GM12878 (cell line): ENCODE measurements at regions of chr15 and their contacts with region 1.

Region 1: GRCh38 chr15:62649793-62650420 is 392.6 kb upstream of the TPM1 start:
- DNase-seq: peak; percentile 46
- ATAC-seq: peak; percentile 95
- H3K4me3 ChIP-seq: 0 out of 2 replicates have a peak overlapping the region, but pooled peaks have one; percentile 31
- H3K27ac ChIP-seq: peak overlapping the region; percentile 70
- H3K4me1 ChIP-seq: peaks cover 20% of the 10 kb centered on the region
- H3K27me3 ChIP-seq: no peaks in the 10 kb centered on the region
- CTCF ChIP-seq: no peak
- EP300 ChIP-seq: no peak
- POLR2A ChIP-seq: no peak
- RAD21 ChIP-seq: no peak

Region 2: DNA sequence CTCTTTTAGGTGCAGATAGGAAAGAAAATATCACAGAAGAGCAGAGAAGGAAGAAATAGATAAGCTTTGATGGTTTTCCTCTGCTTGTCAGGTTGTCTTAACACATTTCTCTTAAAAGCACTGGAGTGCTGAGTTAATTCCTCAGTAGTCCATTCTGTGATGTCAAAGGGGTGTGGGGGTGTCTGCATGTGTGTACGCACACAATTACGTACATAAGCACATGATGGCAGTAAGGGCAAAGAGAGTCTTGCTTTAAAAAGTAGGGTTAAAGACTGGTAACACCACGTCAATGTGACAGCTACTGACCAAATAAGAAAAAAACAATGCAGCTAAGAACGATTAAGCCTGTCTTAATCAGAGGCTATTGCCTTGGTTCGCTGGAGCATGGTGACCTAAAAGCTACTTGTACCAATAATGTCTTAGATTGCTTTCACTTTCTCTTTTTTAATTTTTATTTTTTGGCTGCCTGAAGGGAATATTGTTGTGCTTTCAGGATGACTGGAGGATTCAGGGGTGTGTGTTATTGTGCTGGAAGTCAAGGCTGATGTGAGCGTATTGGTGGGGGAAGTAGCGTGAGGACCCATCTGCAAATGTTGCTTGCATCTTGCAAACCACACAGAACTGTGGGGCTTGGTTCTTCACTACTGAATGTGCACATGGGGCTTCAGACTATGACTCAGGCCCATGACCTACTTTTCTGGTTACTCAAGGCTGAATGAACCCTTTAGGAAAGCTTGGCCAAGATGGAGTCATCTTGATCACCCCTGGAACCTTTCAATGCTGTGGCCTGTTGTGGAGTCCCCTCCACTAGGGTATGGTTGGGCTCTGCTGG is 25.1 kb before region 1 on chr15:
- CTCF ChIA-PET with region 1: no interaction called
- POLR2A ChIA-PET with region 1: no interaction called
- RAD21 ChIA-PET with region 1: no interaction called
- SMC1A ChIA-PET with region 1: no interaction called
- in situ Hi-C with region 1: no loop called
- intact Hi-C with region 1: loop called (anchors 2 kb)
- DNase-seq: peak; percentile 27
- ATAC-seq: peak; percentile 87
- H3K4me3 ChIP-seq: no peak overlapping the region
- H3K27ac ChIP-seq: no peak overlapping the region
- H3K4me1 ChIP-seq: no peaks in the 10 kb centered on the region
- H3K27me3 ChIP-seq: no peaks in the 10 kb centered on the region
- CTCF ChIP-seq: no peak
- EP300 ChIP-seq: no peak
- POLR2A ChIP-seq: no peak
- RAD21 ChIP-seq: no peak

Region 3: GRCh38 chr15:62672268-62672667 is 22.4 kb after region 1 on chr15:
- CTCF ChIA-PET with region 1: no interaction called
- POLR2A ChIA-PET with region 1: no interaction called
- RAD21 ChIA-PET with region 1: no interaction called
- SMC1A ChIA-PET with region 1: no interaction called
- in situ Hi-C with region 1: no loop called
- intact Hi-C with region 1: no loop called
- DNase-seq: no peak
- ATAC-seq: no peak
- H3K4me3 ChIP-seq: no peak overlapping the region
- H3K27ac ChIP-seq: no peak overlapping the region
- H3K4me1 ChIP-seq: no peaks in the 10 kb centered on the region
- H3K27me3 ChIP-seq: no peaks in the 10 kb centered on the region
- CTCF ChIP-seq: no peak
- EP300 ChIP-seq: no peak
- POLR2A ChIP-seq: no peak
- RAD21 ChIP-seq: no peak

Region 4: GRCh38 chr15:62896978-62897647 is 247.2 kb after region 1 on chr15:
- CTCF ChIA-PET with region 1: no interaction called
- POLR2A ChIA-PET with region 1: no interaction called
- RAD21 ChIA-PET with region 1: no interaction called
- SMC1A ChIA-PET with region 1: no interaction called
- in situ Hi-C with region 1: no loop called
- intact Hi-C with region 1: no loop called
- DNase-seq: no peak
- ATAC-seq: no peak
- H3K4me3 ChIP-seq: no peak overlapping the region
- H3K27ac ChIP-seq: no peak overlapping the region
- H3K4me1 ChIP-seq: no peaks in the 10 kb centered on the region
- H3K27me3 ChIP-seq: no peaks in the 10 kb centered on the region; a peak in 2 of 4 replicates
- CTCF ChIP-seq: no peak
- EP300 ChIP-seq: no peak
- POLR2A ChIP-seq: no peak
- RAD21 ChIP-seq: no peak